ENCODE measurements at regions of chr16 and their contacts with region 1.

Region 1: GRCh38 chr16:66483689-66484481 is 56.8 kb downstream of the BEAN1 start:
- DNase-seq: peak; percentile 83
- ATAC-seq: peak; percentile 76
- H3K4me3 Mint-ChIP-seq: no peak overlapping the region
- H3K27ac Mint-ChIP-seq: peak overlapping the region; percentile 9
- H3K4me1 Mint-ChIP-seq: peaks cover 38% of the 10 kb centered on the region
- H3K27me3 Mint-ChIP-seq: no peaks in the 10 kb centered on the region

Region 2: GRCh38 chr16:66028510-66029216 is 455.2 kb before region 1 on chr16:
- CTCF ChIA-PET with region 1: no interaction called
- POLR2A ChIA-PET with region 1: no interaction called
- DNase-seq: no peak
- ATAC-seq: no peak
- H3K4me3 Mint-ChIP-seq: no peak overlapping the region
- H3K27ac Mint-ChIP-seq: no peak overlapping the region
- H3K4me1 Mint-ChIP-seq: no peaks in the 10 kb centered on the region
- H3K27me3 Mint-ChIP-seq: peaks cover 2% of the 10 kb centered on the region

Region 3: DNA sequence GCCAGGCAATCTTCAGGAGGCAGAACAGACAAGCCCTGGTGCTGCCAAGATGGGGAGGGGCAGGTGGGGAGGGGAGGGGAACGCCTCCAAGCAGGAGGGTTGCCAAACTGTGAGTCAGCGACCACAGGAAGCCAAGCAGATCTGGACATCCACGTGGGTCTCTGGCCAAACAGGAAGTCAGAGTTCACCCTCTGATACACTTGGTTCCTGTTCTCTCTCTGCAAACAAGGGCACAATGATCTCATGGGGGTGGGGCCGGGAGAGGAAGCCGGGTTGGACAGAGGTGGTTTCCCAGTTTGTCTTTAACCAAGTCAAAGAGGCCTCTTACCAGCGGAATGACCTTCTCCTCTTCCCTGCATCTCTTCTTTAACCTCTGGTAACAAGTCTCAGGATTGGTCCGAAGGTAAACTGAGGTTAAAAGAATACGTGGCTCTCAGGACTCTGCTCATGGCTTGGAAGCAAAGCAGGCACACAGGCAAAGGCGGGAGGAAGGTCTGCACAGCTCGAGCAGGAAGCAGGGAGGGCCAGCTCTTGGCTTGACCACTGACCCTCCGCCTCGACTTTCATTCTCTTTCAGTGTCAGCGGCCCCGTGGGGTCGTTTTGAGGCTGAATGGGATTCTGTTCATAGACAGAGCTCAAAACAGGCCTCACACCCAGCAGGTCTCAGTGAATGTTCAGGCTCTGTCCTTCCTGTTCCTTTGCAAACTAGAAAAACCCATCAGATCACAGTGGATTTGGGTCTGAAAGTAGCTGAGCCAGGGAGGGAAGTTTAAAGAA is 33.1 kb after region 1 on chr16:
- CTCF ChIA-PET with region 1: interaction called, 16 read pairs
- POLR2A ChIA-PET with region 1: no interaction called
- DNase-seq: peak; percentile 89
- ATAC-seq: peak; percentile 79
- H3K4me3 Mint-ChIP-seq: peak overlapping the region; percentile 74
- H3K27ac Mint-ChIP-seq: peak overlapping the region; percentile 94
- H3K4me1 Mint-ChIP-seq: peaks cover 74% of the 10 kb centered on the region
- H3K27me3 Mint-ChIP-seq: no peaks in the 10 kb centered on the region

Region 4: DNA sequence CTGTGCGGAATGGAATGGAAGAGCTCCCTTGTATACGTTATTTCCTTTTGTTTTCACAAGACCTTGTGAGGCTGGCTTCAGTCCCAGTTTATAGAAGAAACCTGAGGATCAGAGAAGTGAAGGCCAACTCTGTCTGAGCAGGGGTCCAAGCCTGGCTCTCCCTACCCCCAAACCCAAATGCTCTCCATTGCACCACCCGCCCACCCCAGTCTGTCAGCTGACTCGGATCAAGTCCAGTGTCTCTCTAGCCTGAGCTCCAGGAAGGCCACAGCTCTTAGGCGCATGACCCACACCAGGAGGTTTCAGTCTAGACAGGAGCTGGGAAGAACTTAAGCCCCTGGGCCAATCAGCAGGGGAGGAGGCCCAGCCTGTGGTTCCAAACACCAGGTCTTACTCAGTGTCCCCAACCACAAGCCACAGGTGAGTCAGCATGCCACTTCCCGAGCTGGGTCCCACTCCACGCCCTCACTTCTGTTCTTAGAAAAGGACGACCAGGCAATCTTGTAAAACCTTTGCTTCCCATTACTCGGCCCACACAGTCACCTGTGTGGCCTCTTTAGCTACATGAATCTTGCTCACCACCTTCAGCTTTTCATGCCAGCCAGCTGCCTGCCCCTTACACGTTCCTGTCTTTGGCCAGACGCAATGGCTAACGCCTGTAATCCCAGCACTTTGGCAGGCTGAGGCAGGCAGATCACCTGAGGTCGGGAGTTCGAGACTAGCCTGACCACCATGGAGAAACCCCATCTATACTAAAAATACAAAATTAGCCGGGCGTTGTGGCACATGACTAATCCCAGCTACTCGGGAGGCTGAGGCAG is 38.3 kb after region 1 on chr16:
- CTCF ChIA-PET with region 1: interaction called, 16 read pairs
- POLR2A ChIA-PET with region 1: no interaction called
- DNase-seq: peak; percentile 96
- ATAC-seq: peak; percentile 85
- H3K4me3 Mint-ChIP-seq: peak overlapping the region; percentile 61
- H3K27ac Mint-ChIP-seq: peak overlapping the region; percentile 95
- H3K4me1 Mint-ChIP-seq: peaks cover 92% of the 10 kb centered on the region
- H3K27me3 Mint-ChIP-seq: no peaks in the 10 kb centered on the region

Region 5: DNA sequence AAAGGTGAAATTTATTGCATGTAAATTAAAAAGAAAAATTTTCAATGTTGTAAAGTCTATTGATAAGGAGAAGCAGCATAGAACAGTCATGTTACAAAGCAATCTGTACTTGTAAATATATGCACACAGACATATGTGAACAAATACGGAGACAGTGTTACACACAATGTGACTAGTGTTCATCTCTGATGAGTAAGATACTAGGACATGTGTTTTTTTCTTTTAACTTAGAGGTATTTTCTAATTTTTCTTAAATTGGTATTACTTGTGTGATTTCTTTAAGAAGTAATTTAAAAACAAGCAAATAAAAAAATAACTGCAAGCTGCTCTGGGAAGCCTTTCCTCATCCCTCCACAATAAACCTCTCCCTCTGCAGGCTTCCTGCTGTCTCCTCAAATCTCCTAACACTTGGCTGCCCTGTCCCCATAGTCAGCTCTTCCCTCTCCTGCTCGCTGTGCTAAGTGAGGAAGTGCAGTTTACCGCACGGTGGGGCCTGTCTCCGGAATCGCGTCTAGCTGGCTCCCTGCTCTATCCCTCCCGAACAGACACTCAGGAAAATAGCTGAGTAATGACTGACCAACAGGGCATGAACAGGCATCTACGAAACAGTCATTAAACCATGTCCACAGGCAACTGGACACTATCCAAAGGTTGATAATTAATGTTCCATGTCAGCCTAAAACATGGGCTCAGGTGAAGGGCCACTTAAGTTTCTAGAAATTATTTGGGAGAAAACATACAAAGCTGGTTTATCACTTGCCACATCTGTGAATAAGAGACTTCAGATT is 176.7 kb after region 1 on chr16:
- CTCF ChIA-PET with region 1: no interaction called
- POLR2A ChIA-PET with region 1: no interaction called
- DNase-seq: no peak
- ATAC-seq: no peak
- H3K4me3 Mint-ChIP-seq: no peak overlapping the region
- H3K27ac Mint-ChIP-seq: no peak overlapping the region
- H3K4me1 Mint-ChIP-seq: peaks cover 4% of the 10 kb centered on the region
- H3K27me3 Mint-ChIP-seq: peaks cover 15% of the 10 kb centered on the region